ENCODE measurements at regions of chr1 and their contacts with region 1.

Region 1: GRCh38 chr1:38005195-38006007 is at the start of gene FHL3:
- DNase-seq: peak in 1 of 2 donors; percentile 57
- ATAC-seq: peak; percentile 6 to 32 (median 27)
- H3K4me3 ChIP-seq: peak within 1 kb of the TSS; percentile 36
- H3K4me3 Mint-ChIP-seq: peak within 1 kb of the TSS; percentile 98
- H3K27ac ChIP-seq: peak within 1 kb of the TSS; percentile 83
- H3K27ac Mint-ChIP-seq: peak within 1 kb of the TSS; percentile 96 to 100
- H3K4me1 ChIP-seq: peaks cover 85% of the 10 kb centered on the region
- H3K4me1 Mint-ChIP-seq: peaks cover 59 to 65% of the 10 kb centered on the region in 2 donors
- H3K27me3 ChIP-seq: no peaks in the 10 kb centered on the region
- H3K27me3 Mint-ChIP-seq: no peaks in the 10 kb centered on the region
- CTCF ChIP-seq: no peak
- total RNA-seq, gene FHL3: 49.3 to 82.6 (median 53.6) TPM

Region 2: GRCh38 chr1:37474046-37474759 is 531.2 kb before region 1 on chr1 and contains the start of gene ZC3H12A:
- intact Hi-C with region 1: loop called (anchors 10 kb)
- DNase-seq: peak; percentile 96 to 97
- ATAC-seq: peak; percentile 49 to 83 (median 66)
- H3K4me3 ChIP-seq: peak within 1 kb of the TSS; percentile 93
- H3K4me3 Mint-ChIP-seq: peak within 1 kb of the TSS; percentile 95
- H3K27ac ChIP-seq: peak within 1 kb of the TSS; percentile 99
- H3K27ac Mint-ChIP-seq: peak within 1 kb of the TSS; percentile 99 to 100
- H3K4me1 ChIP-seq: peaks cover 76% of the 10 kb centered on the region
- H3K4me1 Mint-ChIP-seq: peaks cover 66 to 75% of the 10 kb centered on the region in 2 donors
- H3K27me3 ChIP-seq: no peaks in the 10 kb centered on the region
- H3K27me3 Mint-ChIP-seq: no peaks in the 10 kb centered on the region
- CTCF ChIP-seq: no peak
- total RNA-seq, gene ZC3H12A: 219 to 366 (median 289) TPM

Region 3: DNA sequence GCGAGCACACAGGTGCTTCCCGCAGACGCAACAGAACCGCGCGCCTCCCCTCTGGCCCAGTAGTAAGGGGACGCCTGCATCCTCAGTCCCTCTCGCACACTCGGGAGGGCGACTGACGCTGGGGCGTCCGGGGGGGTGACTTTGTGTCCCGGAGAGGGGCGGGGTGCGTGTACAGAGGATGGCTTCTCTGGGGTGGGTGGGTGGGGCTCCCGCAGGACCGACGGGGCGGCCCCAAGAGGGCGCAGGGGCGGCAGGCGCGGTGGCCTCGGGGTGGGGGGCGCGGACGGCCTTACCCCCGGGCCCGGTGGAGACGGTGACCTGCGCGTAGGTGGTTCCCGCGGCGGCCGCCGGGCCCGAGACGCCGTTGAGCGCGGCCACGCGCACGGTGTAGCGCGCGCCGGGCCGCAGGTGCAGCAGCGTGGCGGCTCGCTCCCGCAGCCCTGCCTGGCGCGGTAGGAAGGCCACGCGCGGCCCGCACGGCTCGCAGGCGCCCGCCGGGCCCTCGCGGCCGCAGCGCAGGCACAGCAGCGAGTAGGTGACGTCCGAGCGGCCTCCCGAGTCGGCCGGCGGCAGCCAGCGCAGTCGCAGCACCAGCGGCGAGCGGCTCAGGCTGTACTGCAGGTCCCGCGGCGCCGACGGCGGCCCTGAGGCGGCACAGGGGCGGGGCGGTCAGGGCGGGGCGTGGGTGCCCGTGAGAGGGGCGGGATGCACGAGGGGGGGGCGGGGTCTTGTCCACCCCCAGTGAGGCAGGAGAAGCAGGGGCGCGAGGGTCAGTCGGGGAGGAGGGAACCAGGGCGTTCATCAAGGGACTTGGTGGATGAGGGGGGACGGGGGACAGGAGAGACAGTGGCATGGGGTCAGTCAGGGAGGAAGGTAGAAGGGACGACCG is 252.6 kb before region 1 on chr1:
- intact Hi-C with region 1: no loop called
- DNase-seq: no peak
- ATAC-seq: peak; percentile 32 to 62 (median 47)
- H3K4me3 ChIP-seq: no peak overlapping the region
- H3K4me3 Mint-ChIP-seq: peak overlapping the region; percentile 72
- H3K27ac ChIP-seq: no peak overlapping the region
- H3K27ac Mint-ChIP-seq: no peak overlapping the region
- H3K4me1 ChIP-seq: peaks cover 4% of the 10 kb centered on the region
- H3K4me1 Mint-ChIP-seq: peaks cover 0 to 6% of the 10 kb centered on the region in 2 donors
- H3K27me3 ChIP-seq: peaks cover 12% of the 10 kb centered on the region
- H3K27me3 Mint-ChIP-seq: peaks cover 19 to 26% of the 10 kb centered on the region in 2 donors
- CTCF ChIP-seq: no peak

Region 4: GRCh38 chr1:37931361-37932158 is 73.8 kb before region 1 on chr1:
- intact Hi-C with region 1: loop called (anchors 5 kb)
- DNase-seq: peak; percentile 94 to 97
- ATAC-seq: peak; percentile 98 to 99 (median 99)
- H3K4me3 ChIP-seq: peak overlapping the region; percentile 88
- H3K4me3 Mint-ChIP-seq: peak overlapping the region; percentile 96
- H3K27ac ChIP-seq: peak overlapping the region; percentile 58
- H3K27ac Mint-ChIP-seq: peak overlapping the region; percentile 84 to 90
- H3K4me1 ChIP-seq: peaks cover 36% of the 10 kb centered on the region
- H3K4me1 Mint-ChIP-seq: peaks cover 24 to 40% of the 10 kb centered on the region in 2 donors
- H3K27me3 ChIP-seq: no peaks in the 10 kb centered on the region
- H3K27me3 Mint-ChIP-seq: no peaks in the 10 kb centered on the region
- CTCF ChIP-seq: no peak

Region 5: GRCh38 chr1:38243106-38243505 is 237.7 kb after region 1 on chr1:
- intact Hi-C with region 1: no loop called
- DNase-seq: no peak
- ATAC-seq: no peak
- H3K4me3 ChIP-seq: no peak overlapping the region
- H3K4me3 Mint-ChIP-seq: no peak overlapping the region
- H3K27ac ChIP-seq: no peak overlapping the region
- H3K27ac Mint-ChIP-seq: no peak overlapping the region
- H3K4me1 ChIP-seq: no peaks in the 10 kb centered on the region
- H3K4me1 Mint-ChIP-seq: no peaks in the 10 kb centered on the region
- H3K27me3 ChIP-seq: no peaks in the 10 kb centered on the region
- H3K27me3 Mint-ChIP-seq: no peaks in the 10 kb centered on the region
- CTCF ChIP-seq: no peak

Measured in natural killer cell (primary cell).